CD14-positive monocyte (primary cell): ENCODE measurements at regions of chr3 and their contacts with region 1.

Region 1: GRCh38 chr3:197511130-197511529 is 44.6 kb downstream of the BDH1 start:
- DNase-seq: no peak
- H3K4me3 ChIP-seq: no peak overlapping the region
- H3K4me3 Mint-ChIP-seq: no peak overlapping the region
- H3K27ac ChIP-seq: no peak overlapping the region
- H3K27ac Mint-ChIP-seq: no peak overlapping the region
- H3K4me1 ChIP-seq: peaks cover 8 to 9% of the 10 kb centered on the region in 2 donors
- H3K4me1 Mint-ChIP-seq: peaks cover 7% of the 10 kb centered on the region
- H3K27me3 ChIP-seq: peaks cover 0 to 3% of the 10 kb centered on the region in 2 donors
- H3K27me3 Mint-ChIP-seq: peaks cover 2 to 3% (median 2%) of the 10 kb centered on the region in 3 donors
- CTCF ChIP-seq: no peak

Region 2: GRCh38 chr3:197256836-197257444 is 254.2 kb before region 1 on chr3:
- intact Hi-C with region 1: loop called (anchors 2 kb)
- DNase-seq: peak; percentile 18 to 41 (median 24)
- H3K4me3 ChIP-seq: no peak overlapping the region
- H3K4me3 Mint-ChIP-seq: no peak overlapping the region
- H3K27ac ChIP-seq: no peak overlapping the region
- H3K27ac Mint-ChIP-seq: no peak overlapping the region
- H3K4me1 ChIP-seq: no peaks in the 10 kb centered on the region
- H3K4me1 Mint-ChIP-seq: peaks cover 16% of the 10 kb centered on the region
- H3K27me3 ChIP-seq: no peaks in the 10 kb centered on the region
- H3K27me3 Mint-ChIP-seq: no peaks in the 10 kb centered on the region
- CTCF ChIP-seq: peak; percentile 79